ENCODE measurements at regions of chr17 and their contacts with region 1.

Region 1: GRCh38 chr17:82022981-82023374 is at the start of gene LRRC45:
- DNase-seq: peak; percentile 99 to 100
- H3K4me3 ChIP-seq: peak within 1 kb of the TSS; percentile 89 to 99
- H3K27ac ChIP-seq: peak within 1 kb of the TSS; percentile 56 to 71
- H3K4me1 ChIP-seq: peaks cover 12 to 20% of the 10 kb centered on the region in 2 donors
- H3K27me3 ChIP-seq: no peaks in the 10 kb centered on the region
- CTCF ChIP-seq: no peak
- total RNA-seq, gene LRRC45: 2.0 TPM

Region 2: GRCh38 chr17:81911277-81911961 is 111.6 kb before region 1 on chr17 and contains the start of gene PCYT2:
- intact Hi-C with region 1: loop called (anchors 5 kb)
- DNase-seq: peak; percentile 47 to 92
- H3K4me3 ChIP-seq: peak within 1 kb of the TSS; percentile 88 to 89
- H3K27ac ChIP-seq: peak within 1 kb of the TSS; percentile 79 to 83
- H3K4me1 ChIP-seq: peaks cover 2 to 10% of the 10 kb centered on the region in 2 donors
- H3K27me3 ChIP-seq: no peaks in the 10 kb centered on the region
- CTCF ChIP-seq: peak in 1 of 3 experiments; percentile 9
- total RNA-seq, gene PCYT2: 81.1 TPM

Region 3: DNA sequence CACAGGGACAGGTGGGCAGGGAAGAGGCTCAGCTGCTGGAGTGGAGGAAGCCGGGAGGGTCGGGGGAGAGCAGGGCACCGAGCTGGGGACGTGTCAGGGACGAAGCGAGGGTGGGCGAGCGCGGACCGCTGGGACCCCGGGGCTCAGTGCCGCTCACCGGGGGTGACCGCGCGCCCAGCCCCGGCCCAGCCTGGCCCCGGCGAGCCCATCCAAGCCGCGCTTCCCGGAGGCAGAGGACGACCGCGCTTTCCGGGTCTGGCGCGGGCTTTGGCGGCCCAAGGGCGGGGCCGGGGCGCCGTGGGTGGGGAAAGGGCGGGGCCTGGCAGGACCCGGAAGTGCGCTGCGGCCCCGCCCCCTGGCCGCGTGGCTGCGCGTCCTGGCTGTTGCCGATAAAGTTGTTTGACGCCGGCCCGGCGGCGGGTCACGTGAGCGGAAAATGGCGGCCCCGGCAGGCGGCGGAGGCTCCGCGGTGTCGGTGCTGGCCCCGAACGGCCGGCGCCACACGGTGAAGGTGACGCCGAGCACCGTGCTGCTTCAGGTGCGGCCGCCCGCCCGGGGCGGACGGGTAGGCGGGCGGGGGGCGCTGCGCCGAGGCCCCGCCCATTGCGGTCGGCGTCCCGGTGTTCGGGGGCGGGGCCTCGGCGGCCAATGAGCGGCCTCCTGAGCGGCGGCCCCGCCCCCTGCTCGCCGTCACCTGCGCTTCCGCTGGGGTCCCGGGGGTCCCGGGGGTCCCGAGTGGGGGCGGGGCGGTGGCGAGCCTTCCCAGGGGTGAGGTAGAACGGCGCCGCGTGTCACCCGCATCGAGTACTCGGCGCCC is 45.6 kb before region 1 on chr17 and contains the start of gene ASPSCR1:
- intact Hi-C with region 1: loop called (anchors 1 kb)
- DNase-seq: peak; percentile 54 to 93
- H3K4me3 ChIP-seq: peak within 1 kb of the TSS; percentile 74 to 84
- H3K27ac ChIP-seq: peak within 1 kb of the TSS; percentile 79 to 95
- H3K4me1 ChIP-seq: peaks cover 4 to 11% of the 10 kb centered on the region in 2 donors
- H3K27me3 ChIP-seq: no peaks in the 10 kb centered on the region
- CTCF ChIP-seq: peak in 1 of 3 experiments; percentile 18
- total RNA-seq, gene ASPSCR1: 45.1 TPM

Region 4: DNA sequence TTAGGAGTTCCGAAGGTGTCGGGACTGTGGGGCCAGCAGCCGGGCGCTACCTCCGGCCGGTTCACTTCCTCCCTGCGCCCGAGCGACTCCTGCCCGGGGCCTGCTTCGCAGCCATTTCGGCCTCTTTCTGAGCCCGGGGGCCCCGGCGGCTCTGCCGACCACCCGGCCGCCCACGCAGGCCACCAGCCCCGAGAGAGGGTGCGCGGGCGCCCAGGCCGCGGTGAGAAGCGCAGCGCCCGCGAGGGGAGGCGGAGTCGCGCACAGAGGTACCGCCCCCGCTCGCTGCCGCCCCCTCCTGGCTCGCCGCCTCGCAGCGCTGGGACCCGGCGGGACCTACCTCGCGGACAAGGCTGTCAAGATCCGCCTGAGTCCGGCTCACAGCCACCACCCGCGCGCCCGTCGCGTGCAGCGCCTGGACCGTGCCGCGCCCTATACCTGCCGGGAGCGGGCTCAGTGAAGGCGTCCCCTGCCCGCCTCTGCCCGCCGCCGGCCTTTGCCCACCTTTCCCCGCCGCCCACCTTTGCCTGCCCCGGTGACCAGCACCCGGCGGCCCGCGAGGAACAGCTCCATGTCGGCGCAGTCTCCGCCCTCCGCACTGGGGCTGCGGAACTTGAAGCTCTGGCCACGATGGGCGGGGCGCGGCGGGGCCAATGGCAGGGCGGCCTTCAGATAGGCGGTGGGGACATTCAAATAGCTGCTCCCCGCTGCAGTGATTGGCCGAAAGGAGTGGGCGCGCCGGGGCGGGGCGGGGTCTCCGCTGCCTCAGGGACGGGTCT is 14.3 kb after region 1 on chr17 and contains the start of gene DCXR:
- intact Hi-C with region 1: loop called (anchors 1 kb)
- DNase-seq: peak; percentile 93 to 99
- H3K4me3 ChIP-seq: peak within 1 kb of the TSS; percentile 72 to 75
- H3K27ac ChIP-seq: peak within 1 kb of the TSS; percentile 83 to 93
- H3K4me1 ChIP-seq: peaks cover 12 to 16% of the 10 kb centered on the region in 2 donors
- H3K27me3 ChIP-seq: peaks cover 3% of the 10 kb centered on the region
- CTCF ChIP-seq: peak; percentile 71 to 83 (median 73)
- total RNA-seq, gene DCXR: 160 TPM

Region 5: DNA sequence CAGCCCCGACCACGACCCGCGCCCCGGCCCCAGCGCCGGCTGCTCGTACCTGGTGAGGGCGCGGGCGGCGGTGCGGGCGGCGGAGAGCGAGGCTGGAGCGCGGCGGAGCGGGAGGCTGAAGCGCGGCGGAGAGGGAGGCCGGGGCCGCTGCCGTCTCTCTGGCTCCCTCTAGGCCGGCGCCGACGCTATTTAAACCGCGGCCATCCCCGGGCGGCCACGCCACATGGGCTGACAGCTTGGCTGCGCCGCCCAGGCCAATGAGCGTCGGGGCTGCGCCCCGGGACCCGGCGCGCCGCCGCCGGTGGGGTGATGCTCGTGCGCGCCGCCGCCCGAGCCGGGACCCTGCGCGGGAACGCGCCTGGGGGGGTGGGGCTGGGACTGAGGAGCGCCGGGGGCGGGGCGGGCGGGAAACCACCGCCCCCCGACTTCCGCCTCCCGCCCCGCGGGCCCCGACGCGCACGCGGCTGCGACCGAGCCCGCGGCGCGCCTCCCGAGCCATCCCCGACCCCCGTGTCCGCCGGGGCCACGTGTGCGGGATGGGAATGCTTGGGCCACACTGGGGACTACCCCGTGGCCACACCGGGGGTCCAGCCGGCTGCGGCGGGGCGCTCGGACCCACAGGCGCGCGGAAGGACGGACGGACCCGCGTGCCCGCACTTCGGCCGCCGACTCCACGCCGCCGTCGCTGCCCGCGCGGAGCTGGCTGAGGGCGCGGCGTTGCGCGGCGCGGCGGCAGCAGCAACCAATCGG is 75.3 kb after region 1 on chr17 and contains the start of gene FASN:
- intact Hi-C with region 1: loop called (anchors 1 kb)
- DNase-seq: peak; percentile 62 to 95
- H3K4me3 ChIP-seq: peak within 1 kb of the TSS; percentile 67 to 98
- H3K27ac ChIP-seq: peak within 1 kb of the TSS; percentile 94 to 96
- H3K4me1 ChIP-seq: peaks cover 14 to 16% of the 10 kb centered on the region in 2 donors
- H3K27me3 ChIP-seq: no peaks in the 10 kb centered on the region
- CTCF ChIP-seq: peak; percentile 28 to 51 (median 41)
- total RNA-seq, gene FASN: 90.9 TPM

Region 6: GRCh38 chr17:82267575-82268379 is 244.8 kb after region 1 on chr17:
- intact Hi-C with region 1: no loop called
- DNase-seq: peak; percentile 91 to 97
- H3K4me3 ChIP-seq: peak overlapping the region; percentile 5 to 40
- H3K27ac ChIP-seq: peak overlapping the region; percentile 91 to 92
- H3K4me1 ChIP-seq: peaks cover 17 to 38% of the 10 kb centered on the region in 2 donors
- H3K27me3 ChIP-seq: no peaks in the 10 kb centered on the region
- CTCF ChIP-seq: no peak